A673 (cell line): ENCODE measurements at regions of chr15 and their contacts with region 1.

Region 1: DNA sequence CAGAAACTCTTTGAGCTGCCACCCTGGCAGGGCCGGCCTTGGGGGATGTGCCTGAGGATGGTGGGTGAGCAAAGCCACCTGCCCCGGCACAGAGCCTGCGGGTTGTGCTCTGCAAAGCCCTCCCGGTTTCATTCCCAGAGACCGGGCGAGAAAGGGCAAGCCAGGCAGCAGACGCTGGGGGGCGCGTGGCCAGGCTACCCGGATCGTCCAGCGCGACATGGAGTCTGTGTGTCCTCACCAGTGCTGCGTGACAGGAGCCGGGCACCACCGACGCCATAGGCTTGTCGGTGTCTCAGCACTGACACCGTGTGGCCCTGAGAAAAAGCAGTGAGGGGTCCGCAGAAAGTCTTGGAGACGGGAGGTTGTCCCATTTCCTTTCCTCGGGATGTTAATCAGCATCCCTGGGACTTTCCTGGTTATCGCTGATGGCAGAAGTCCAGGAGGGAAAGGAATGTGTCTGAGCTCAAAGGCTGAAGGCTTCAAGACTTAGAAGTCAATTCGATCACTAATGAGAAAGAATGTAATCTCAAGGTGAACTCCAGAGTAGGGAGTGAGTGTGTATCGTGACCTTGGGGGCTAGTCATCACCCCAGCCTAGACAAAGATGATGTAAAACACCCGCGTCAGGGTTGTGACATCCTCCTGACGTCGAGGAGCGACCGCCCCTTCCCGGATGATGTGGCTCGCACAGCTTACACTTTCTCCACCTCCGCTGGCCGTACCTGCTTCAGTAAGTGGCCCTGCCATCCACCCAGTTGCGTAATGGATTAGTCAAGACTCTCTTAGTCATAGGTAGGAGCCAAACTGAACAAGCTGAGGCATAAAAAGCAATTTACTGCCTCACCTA is 36.3 kb upstream of the PLA2G4E start:
- DNase-seq: peak; percentile 86
- H3K4me3 ChIP-seq: peak overlapping the region; percentile 33
- H3K27ac ChIP-seq: no peak overlapping the region
- H3K4me1 ChIP-seq: no peaks in the 10 kb centered on the region
- H3K27me3 ChIP-seq: no peaks in the 10 kb centered on the region
- CTCF ChIP-seq: peak; percentile 89

Region 2: DNA sequence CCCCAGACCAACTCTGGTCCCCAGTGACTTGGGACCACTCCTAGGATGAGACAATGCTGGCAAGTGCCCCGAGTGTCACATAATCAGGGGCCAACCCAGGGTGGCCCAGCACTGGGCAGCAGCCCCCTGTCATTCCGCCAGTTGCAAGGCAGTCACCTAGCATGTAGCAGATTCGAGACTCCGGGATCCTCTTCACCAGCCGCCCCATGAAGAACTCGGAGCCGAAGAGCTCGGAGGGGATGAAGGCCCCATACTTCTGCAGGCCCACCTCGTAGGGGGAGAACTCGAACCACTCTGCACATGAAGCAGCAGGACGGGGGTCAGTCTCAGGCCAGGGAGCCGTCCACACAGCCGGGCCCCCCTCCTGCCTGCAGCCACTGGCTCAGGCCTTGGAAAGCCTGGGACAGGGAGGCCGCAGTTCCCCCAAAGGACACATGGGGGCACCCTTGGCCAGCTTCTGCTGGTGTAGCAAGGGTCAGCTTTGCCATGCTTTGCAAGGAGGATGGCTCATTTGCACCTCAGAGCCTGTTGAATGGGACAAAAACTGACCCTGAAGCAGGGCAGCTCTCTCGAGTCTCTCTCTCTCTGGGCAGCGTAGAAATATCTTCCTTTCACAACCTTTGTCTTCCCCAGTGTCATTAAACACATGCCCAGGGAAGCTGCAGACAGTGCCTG is 67.8 kb before region 1 on chr15:
- CTCF ChIA-PET with region 1: interaction called, 11 read pairs
- POLR2A ChIA-PET with region 1: no interaction called
- intact Hi-C with region 1: loop called (anchors 1 kb)
- DNase-seq: peak; percentile 79
- H3K4me3 ChIP-seq: no peak overlapping the region
- H3K27ac ChIP-seq: no peak overlapping the region
- H3K4me1 ChIP-seq: no peaks in the 10 kb centered on the region
- H3K27me3 ChIP-seq: no peaks in the 10 kb centered on the region
- CTCF ChIP-seq: peak; percentile 97

Region 3: GRCh38 chr15:42344763-42345162 is 287.6 kb after region 1 on chr15:
- CTCF ChIA-PET with region 1: no interaction called
- POLR2A ChIA-PET with region 1: no interaction called
- intact Hi-C with region 1: no loop called
- DNase-seq: no peak
- H3K4me3 ChIP-seq: no peak overlapping the region
- H3K27ac ChIP-seq: no peak overlapping the region
- H3K4me1 ChIP-seq: no peaks in the 10 kb centered on the region
- H3K27me3 ChIP-seq: no peaks in the 10 kb centered on the region
- CTCF ChIP-seq: no peak